Heart right ventricle (tissue), 16 donors: ENCODE measurements at regions of chr2 and their contacts with region 1.

Region 1: DNA sequence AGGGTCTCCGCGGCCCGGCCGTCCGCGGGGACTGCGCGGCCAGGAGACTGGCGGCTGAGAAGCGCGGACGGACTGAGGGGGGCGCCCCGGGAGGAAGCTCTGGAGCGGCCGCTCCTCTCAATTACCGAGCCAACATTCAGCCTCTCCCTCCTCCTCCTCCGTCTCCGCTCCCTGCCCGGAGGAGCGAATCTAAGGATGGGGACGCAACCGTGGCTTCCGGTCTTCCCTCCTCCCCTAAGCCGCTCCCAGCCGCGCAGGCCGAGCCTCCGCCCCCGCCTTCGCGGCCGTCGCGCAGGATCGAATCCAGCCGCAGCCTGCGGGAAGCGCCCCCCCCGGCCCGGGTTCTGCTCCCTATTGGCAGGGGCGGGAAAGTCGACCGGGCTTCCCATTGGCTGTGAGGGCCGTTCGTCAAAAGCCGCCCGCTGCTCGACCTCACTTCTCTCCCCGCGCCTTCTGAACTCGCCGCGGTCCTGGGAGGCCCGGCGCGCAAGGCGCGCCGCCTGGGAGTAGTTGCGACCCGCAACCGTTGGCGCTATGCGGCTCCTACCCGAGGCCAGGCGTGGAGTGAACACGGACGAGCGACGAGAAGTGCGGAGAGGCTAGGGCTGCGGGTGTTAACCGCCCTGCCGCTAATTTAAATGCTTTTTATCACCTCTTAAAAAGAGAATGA is at the start of gene HNRNPLL:
- DNase-seq: peak; percentile 99
- ATAC-seq: peak; percentile 94 to 98 (median 97)
- H3K4me3 ChIP-seq: peak within 1 kb of the TSS; percentile 65 to 97 (median 91)
- H3K27ac ChIP-seq: peak within 1 kb of the TSS; percentile 92 to 98 (median 97)
- H3K4me1 ChIP-seq: peaks cover 5 to 53% (median 42%) of the 10 kb centered on the region in 9 donors
- H3K27me3 ChIP-seq: no peaks in the 10 kb centered on the region
- CTCF ChIP-seq: peak in 2 of 9 donors; percentile 10 to 20
- total RNA-seq, gene HNRNPLL: 22.4 to 32.7 (median 25.9) TPM

Region 2: DNA sequence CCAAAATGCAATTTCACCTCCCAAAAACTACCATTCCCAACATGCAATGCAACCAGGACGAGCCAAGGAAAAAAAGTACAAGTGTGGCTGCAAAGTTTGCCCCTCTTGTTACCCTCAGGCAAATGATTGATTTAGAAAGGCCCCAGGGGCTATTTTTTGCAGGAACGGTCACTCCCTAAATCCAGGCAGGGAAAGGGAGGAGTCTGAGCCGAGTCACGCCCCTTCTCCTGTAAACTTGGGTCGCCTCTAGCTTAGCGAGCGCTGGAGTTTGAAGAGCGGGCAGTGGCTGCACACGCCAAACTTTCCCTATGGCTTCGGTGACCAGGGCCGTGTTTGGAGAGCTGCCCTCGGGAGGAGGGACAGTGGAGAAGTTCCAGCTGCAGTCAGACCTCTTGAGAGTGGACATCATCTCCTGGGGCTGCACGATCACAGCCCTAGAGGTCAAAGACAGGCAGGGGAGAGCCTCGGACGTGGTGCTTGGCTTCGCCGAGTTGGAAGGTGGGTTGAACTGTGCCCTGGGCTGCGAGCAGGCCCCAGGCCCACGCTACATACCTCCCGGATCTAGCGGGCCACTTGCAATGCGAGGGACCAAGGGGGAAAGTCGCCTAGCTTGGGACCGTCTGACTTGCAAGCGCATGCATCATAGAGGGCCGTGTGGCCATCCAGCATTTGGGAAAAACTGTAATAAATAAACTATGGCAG is 63.1 kb after region 1 on chr2 and contains the start of gene GALM:
- intact Hi-C with region 1: loop called in 9 of 10 experiments (anchors 2 to 10 kb)
- DNase-seq: peak; percentile 78 to 91
- ATAC-seq: peak; percentile 94 to 98 (median 96)
- H3K4me3 ChIP-seq: peak within 1 kb of the TSS; percentile 39 to 78 (median 65)
- H3K27ac ChIP-seq: peak within 1 kb of the TSS; percentile 29 to 87 (median 71)
- H3K4me1 ChIP-seq: peaks cover 0 to 55% (median 10%) of the 10 kb centered on the region in 9 donors
- H3K27me3 ChIP-seq: no peaks in the 10 kb centered on the region
- CTCF ChIP-seq: no peak
- total RNA-seq, gene GALM: 9.4 to 18.6 (median 11.0) TPM

Region 3: DNA sequence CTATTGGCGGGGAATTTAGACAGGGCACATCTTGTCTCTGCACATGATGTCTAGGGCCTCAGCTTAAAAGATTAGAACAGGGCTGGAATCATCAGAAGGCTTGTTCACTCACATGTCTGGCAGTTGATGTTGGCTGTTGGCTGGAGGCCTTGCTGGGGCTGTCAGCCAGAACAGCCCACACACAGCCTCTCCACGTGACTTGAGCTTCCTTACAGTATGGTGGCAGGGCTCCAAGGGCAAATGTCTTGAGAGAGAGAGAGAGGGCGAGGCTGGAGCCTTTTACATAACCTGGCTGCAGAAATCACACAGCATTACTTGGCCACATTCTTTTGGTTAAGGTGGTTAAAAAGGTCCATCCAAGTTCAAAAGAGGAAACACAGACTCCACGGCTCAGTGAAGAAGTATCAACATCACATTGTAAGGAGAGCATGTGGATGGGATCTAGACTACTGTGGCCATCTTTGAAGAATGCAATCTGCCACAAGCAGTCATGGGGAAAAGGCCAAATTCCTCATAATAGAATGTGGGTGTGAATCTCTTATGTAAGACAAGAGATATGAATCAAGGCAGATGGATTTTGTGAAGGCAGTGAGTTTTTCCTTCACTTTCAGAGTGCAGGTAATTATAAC is 117.9 kb after region 1 on chr2:
- intact Hi-C with region 1: loop called in 5 of 10 experiments (anchors 5 kb)
- DNase-seq: peak; percentile 73 to 80
- ATAC-seq: peak; percentile 86 to 94 (median 90)
- H3K4me3 ChIP-seq: no peak overlapping the region
- H3K27ac ChIP-seq: peak overlapping the region in 7 of 10 donors; percentile 11 to 78 (median 63)
- H3K4me1 ChIP-seq: peaks cover 0 to 38% (median 19%) of the 10 kb centered on the region in 9 donors
- H3K27me3 ChIP-seq: no peaks in the 10 kb centered on the region
- CTCF ChIP-seq: no peak

Region 4: DNA sequence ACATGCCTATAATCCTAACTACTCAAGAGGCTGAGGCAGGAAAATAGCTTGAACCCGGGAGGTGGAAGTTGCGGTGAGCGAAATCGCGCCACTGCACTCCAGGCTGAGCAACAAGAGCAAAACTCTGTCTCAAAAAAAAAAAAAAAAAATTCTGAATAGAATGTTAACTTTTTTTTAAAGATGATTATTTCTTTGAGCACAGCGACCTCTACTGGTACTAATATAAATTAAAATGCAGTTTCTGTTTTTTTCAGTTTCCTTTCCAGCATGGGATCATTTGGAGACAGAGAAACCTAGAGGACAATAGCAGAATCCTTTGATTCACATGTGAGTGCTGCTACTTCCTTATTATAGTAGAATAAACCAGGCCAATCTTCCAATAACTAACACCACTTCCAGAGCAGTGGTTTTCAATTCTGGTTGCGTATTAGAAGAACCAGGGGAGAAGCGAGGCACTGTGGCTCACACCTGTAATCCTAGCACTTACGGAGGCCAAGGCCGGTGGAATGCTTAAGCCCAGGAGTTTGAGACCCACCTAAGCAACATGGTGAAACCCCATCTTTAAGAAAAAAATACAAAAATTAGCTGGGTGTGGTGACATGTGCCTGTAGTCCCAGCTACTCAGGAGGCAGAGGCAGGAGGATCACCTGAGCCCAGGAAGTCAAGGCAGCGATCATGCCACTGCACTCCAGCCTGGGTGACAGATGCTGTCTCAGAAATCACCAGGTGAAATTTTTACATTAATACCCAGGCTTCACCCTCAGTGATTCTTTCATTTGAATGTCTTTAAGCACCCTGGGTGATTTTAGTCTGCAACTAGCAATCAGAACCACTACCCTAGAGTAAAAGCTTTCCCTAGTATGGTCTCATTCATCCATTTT is 138.2 kb after region 1 on chr2:
- intact Hi-C with region 1: loop called in 2 of 10 experiments (anchors 1 to 5 kb)
- DNase-seq: no peak
- ATAC-seq: peak in 6 of 8 donors; percentile 12 to 47 (median 26)
- H3K4me3 ChIP-seq: peak overlapping the region in 1 of 10 donors; percentile 9
- H3K27ac ChIP-seq: peak overlapping the region in 5 of 10 donors; percentile 14 to 40 (median 38)
- H3K4me1 ChIP-seq: peaks cover 0 to 58% (median 37%) of the 10 kb centered on the region in 9 donors
- H3K27me3 ChIP-seq: no peaks in the 10 kb centered on the region
- CTCF ChIP-seq: peak; percentile 48 to 76 (median 64)

Region 5: GRCh38 chr2:38750891-38751595 is 148.2 kb after region 1 on chr2 and contains the start of gene SRSF7:
- intact Hi-C with region 1: loop called in 2 of 10 experiments (anchors 2 to 5 kb)
- DNase-seq: peak; percentile 97 to 98
- ATAC-seq: peak; percentile 91 to 97 (median 94)
- H3K4me3 ChIP-seq: peak within 1 kb of the TSS; percentile 64 to 94 (median 85)
- H3K27ac ChIP-seq: peak within 1 kb of the TSS; percentile 90 to 100 (median 98)
- H3K4me1 ChIP-seq: peaks cover 8 to 60% (median 42%) of the 10 kb centered on the region in 9 donors
- H3K27me3 ChIP-seq: no peaks in the 10 kb centered on the region
- CTCF ChIP-seq: no peak
- total RNA-seq, gene SRSF7: 33.2 to 76.8 (median 47.2) TPM

Region 6: DNA sequence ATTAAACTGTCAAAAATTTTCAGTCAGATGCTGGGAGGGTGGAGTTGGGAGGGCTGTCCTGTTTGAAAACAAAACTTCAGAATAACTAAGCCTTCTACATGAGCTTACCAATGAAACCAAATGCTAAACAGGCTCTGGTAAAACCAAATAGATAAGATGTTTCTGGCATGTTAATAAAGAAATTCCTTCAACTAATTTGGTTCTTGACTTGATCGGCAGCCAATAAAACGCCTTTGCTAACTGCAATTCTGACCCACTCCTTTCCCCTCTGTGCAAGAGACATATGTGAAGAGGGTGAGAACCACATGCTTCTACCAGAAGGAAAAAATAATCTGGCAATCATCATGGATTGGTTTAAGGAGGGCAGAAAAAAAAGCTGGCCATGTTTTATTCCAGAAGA is 813.3 kb after region 1 on chr2:
- intact Hi-C with region 1: no loop called
- DNase-seq: no peak
- ATAC-seq: no peak
- H3K4me3 ChIP-seq: no peak overlapping the region
- H3K27ac ChIP-seq: peak overlapping the region in 1 of 10 donors; percentile 17
- H3K4me1 ChIP-seq: peaks cover 0 to 90% (median 74%) of the 10 kb centered on the region in 9 donors
- H3K27me3 ChIP-seq: no peaks in the 10 kb centered on the region
- CTCF ChIP-seq: no peak